ENCODE measurements at regions of chr7 and their contacts with region 1.

Region 1: GRCh38 chr7:18583305-18583704 is 87.8 kb downstream of the HDAC9 start:
- DNase-seq: no peak
- ATAC-seq: peak in 4 of 8 donors; percentile 37 to 78 (median 68)
- H3K4me3 ChIP-seq: no peak overlapping the region
- H3K27ac ChIP-seq: peak overlapping the region in 2 of 10 donors; percentile 32 to 39
- H3K4me1 ChIP-seq: peaks cover 0 to 22% (median 5%) of the 10 kb centered on the region in 9 donors
- H3K27me3 ChIP-seq: no peaks in the 10 kb centered on the region
- CTCF ChIP-seq: no peak

Region 2: DNA sequence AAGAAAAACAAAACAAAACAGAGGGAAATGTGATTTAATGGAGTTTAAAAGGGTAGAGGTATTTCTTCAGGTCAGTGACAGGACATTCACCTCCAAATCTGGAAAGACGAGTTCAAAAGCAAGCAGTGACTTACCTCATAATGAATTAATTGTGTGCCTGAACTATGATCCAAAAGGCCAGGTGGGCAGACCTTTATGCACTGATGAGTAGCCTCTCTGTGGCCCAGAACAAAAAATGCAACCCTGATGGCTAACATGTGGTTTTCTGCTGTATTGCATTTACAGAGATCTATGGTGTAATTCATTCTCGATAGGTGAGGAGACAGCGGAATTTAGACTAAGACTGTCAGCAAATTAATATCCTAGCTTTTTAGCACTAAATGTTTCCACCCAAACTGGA is 54.2 kb after region 1 on chr7:
- intact Hi-C with region 1: no loop called
- DNase-seq: no peak
- ATAC-seq: no peak
- H3K4me3 ChIP-seq: no peak overlapping the region
- H3K27ac ChIP-seq: no peak overlapping the region
- H3K4me1 ChIP-seq: peaks cover 0 to 21% (median 10%) of the 10 kb centered on the region in 9 donors
- H3K27me3 ChIP-seq: no peaks in the 10 kb centered on the region
- CTCF ChIP-seq: no peak

Region 3: GRCh38 chr7:19051767-19052375 is 468.6 kb after region 1 on chr7:
- intact Hi-C with region 1: loop called in 2 of 10 experiments (anchors 10 kb)
- DNase-seq: no peak
- ATAC-seq: no peak
- H3K4me3 ChIP-seq: no peak overlapping the region
- H3K27ac ChIP-seq: no peak overlapping the region
- H3K4me1 ChIP-seq: no peaks in the 10 kb centered on the region
- H3K27me3 ChIP-seq: no peaks in the 10 kb centered on the region
- CTCF ChIP-seq: peak; percentile 43 to 80 (median 73)

Measured in heart right ventricle (tissue), 16 donors.